MCF 10A (cell line): ENCODE measurements at regions of chr12 and their contacts with region 1.

Region 1: GRCh38 chr12:12704593-12705230 is 8.7 kb upstream of the GPR19 start:
- DNase-seq: peak; percentile 92
- H3K4me3 Mint-ChIP-seq: no peak overlapping the region
- H3K27ac Mint-ChIP-seq: no peak overlapping the region
- H3K4me1 Mint-ChIP-seq: peaks cover 11% of the 10 kb centered on the region
- H3K27me3 Mint-ChIP-seq: no peaks in the 10 kb centered on the region
- CTCF ChIP-seq: peak; percentile 98

Region 2: DNA sequence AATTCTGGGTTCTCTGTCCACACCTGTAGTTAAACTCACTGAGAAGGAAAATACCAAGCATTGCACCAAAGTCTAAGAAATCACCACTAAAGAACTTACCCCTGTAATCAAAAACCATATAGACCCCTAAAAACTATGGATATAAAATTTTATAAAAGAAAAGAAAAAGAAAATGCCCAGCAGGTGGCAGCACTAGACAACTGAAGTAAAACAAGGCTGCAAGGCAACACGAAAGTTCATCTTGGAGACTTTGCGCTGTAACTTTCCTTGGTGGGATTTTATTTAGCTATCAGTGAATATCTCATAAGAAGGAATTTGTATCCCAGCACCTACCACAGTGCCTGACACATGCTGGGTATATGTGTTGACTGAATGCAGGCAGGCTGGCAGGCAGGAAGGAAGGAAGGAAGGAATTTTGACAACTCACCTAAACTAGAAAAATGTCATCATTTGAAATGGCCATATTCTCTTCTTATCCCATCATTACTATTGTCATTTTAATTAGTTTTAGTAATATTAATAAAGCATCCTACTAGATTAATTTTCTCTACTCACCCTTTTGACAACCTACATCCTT is 1123.4 kb before region 1 on chr12:
- CTCF ChIA-PET with region 1: interaction called, 3 read pairs
- POLR2A ChIA-PET with region 1: no interaction called
- intact Hi-C with region 1: loop called (anchors 1 kb)
- DNase-seq: peak; percentile 76
- H3K4me3 Mint-ChIP-seq: no peak overlapping the region
- H3K27ac Mint-ChIP-seq: no peak overlapping the region
- H3K4me1 Mint-ChIP-seq: peaks cover 44% of the 10 kb centered on the region
- H3K27me3 Mint-ChIP-seq: no peaks in the 10 kb centered on the region
- CTCF ChIP-seq: peak; percentile 52

Region 3: GRCh38 chr12:12266873-12267741 is 437.6 kb before region 1 on chr12 and contains the start of gene LRP6:
- CTCF ChIA-PET with region 1: no interaction called
- POLR2A ChIA-PET with region 1: no interaction called
- intact Hi-C with region 1: loop called (anchors 10 kb)
- DNase-seq: peak; percentile 92
- H3K4me3 Mint-ChIP-seq: peak within 1 kb of the TSS; percentile 94
- H3K27ac Mint-ChIP-seq: peak within 1 kb of the TSS; percentile 99
- H3K4me1 Mint-ChIP-seq: peaks cover 18% of the 10 kb centered on the region
- H3K27me3 Mint-ChIP-seq: no peaks in the 10 kb centered on the region
- CTCF ChIP-seq: no peak
- total RNA-seq, gene LRP6: 24.9 and 27.6 TPM in 2 replicates

Region 4: GRCh38 chr12:12387501-12387900 is 317.2 kb before region 1 on chr12:
- CTCF ChIA-PET with region 1: interaction called, 10 read pairs
- POLR2A ChIA-PET with region 1: interaction called, 4 read pairs
- intact Hi-C with region 1: no loop called
- DNase-seq: peak; percentile 59
- H3K4me3 Mint-ChIP-seq: peak overlapping the region; percentile 27
- H3K27ac Mint-ChIP-seq: peak overlapping the region; percentile 79
- H3K4me1 Mint-ChIP-seq: peaks cover 8% of the 10 kb centered on the region
- H3K27me3 Mint-ChIP-seq: no peaks in the 10 kb centered on the region
- CTCF ChIP-seq: no peak

Region 5: DNA sequence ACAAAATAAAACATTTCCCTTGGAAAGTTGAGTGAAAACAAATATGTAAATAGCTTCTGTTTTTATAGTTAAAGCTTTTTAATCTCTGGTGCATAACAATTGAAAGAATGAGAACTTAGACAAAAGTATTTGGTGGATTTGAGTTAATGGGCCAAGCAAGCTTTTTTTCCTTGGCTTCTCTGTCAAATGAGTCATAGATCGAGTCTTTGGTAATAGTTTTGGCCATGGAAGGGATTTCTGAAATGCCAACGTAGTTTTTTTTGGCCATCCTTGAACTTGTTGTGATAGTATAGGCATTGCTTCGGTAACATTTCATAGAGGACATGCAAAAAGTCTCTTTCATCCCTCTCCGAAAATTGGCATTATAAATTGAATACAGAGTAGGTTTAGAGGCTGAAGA is 43.6 kb before region 1 on chr12:
- CTCF ChIA-PET with region 1: interaction called, 8 read pairs
- POLR2A ChIA-PET with region 1: interaction called, 6 read pairs
- intact Hi-C with region 1: loop called (anchors 1 kb)
- DNase-seq: peak; percentile 81
- H3K4me3 Mint-ChIP-seq: peak overlapping the region; percentile 46
- H3K27ac Mint-ChIP-seq: peak overlapping the region; percentile 51
- H3K4me1 Mint-ChIP-seq: peaks cover 24% of the 10 kb centered on the region
- H3K27me3 Mint-ChIP-seq: no peaks in the 10 kb centered on the region
- CTCF ChIP-seq: no peak

Region 6: DNA sequence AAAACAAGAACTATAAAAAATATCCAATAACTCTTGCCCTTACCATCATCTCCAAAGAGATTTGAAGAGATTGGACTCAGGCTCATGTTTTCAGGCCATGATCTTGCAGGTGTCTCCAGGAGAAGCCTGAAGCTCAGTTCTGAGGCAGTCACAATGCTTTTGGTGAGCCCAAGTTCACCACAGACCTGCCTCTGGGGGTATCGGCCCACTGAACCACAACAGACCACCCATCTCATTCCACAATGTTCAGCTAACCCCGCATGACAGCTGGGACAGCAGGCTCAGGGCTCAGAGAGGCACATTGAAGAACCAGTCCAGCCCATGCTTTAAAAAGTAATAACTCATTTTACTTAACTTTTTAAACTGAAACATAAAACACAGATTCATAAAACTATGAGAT is 52.4 kb after region 1 on chr12:
- CTCF ChIA-PET with region 1: no interaction called
- POLR2A ChIA-PET with region 1: no interaction called
- intact Hi-C with region 1: no loop called
- DNase-seq: no peak
- H3K4me3 Mint-ChIP-seq: no peak overlapping the region
- H3K27ac Mint-ChIP-seq: no peak overlapping the region
- H3K4me1 Mint-ChIP-seq: peaks cover 13% of the 10 kb centered on the region
- H3K27me3 Mint-ChIP-seq: no peaks in the 10 kb centered on the region
- CTCF ChIP-seq: no peak

Region 7: GRCh38 chr12:12837025-12837872 is 132.5 kb after region 1 on chr12:
- CTCF ChIA-PET with region 1: no interaction called
- POLR2A ChIA-PET with region 1: no interaction called
- intact Hi-C with region 1: no loop called
- DNase-seq: peak; percentile 83
- H3K4me3 Mint-ChIP-seq: no peak overlapping the region
- H3K27ac Mint-ChIP-seq: peak overlapping the region; percentile 30
- H3K4me1 Mint-ChIP-seq: peaks cover 56% of the 10 kb centered on the region
- H3K27me3 Mint-ChIP-seq: no peaks in the 10 kb centered on the region
- CTCF ChIP-seq: peak; percentile 62

Region 8: DNA sequence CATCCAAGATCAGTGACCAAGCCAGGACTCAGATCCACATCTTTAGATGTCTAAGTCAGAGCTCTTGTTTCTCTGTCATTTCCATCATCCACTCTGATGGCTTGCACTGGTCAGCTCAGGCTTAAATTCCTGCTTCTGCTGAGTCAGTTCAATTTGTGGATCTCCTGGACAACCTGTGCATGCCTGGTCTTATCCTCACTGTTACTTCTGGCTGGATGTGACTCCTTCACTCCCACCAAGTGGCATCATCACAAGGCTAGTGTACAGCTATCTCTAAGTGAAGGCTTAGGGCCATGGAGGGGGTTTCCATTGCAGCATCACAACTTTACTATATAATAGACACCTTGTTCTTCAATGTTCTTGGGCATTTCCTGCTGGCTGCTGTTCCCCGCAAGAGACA is 594.7 kb after region 1 on chr12:
- CTCF ChIA-PET with region 1: no interaction called
- POLR2A ChIA-PET with region 1: no interaction called
- intact Hi-C with region 1: no loop called
- DNase-seq: no peak
- H3K4me3 Mint-ChIP-seq: no peak overlapping the region
- H3K27ac Mint-ChIP-seq: no peak overlapping the region
- H3K4me1 Mint-ChIP-seq: no peaks in the 10 kb centered on the region
- H3K27me3 Mint-ChIP-seq: peaks cover 65% of the 10 kb centered on the region
- CTCF ChIP-seq: no peak